Mammary epithelial cell (primary cell): ENCODE measurements at regions of chr1 and their contacts with region 1.

Region 1: DNA sequence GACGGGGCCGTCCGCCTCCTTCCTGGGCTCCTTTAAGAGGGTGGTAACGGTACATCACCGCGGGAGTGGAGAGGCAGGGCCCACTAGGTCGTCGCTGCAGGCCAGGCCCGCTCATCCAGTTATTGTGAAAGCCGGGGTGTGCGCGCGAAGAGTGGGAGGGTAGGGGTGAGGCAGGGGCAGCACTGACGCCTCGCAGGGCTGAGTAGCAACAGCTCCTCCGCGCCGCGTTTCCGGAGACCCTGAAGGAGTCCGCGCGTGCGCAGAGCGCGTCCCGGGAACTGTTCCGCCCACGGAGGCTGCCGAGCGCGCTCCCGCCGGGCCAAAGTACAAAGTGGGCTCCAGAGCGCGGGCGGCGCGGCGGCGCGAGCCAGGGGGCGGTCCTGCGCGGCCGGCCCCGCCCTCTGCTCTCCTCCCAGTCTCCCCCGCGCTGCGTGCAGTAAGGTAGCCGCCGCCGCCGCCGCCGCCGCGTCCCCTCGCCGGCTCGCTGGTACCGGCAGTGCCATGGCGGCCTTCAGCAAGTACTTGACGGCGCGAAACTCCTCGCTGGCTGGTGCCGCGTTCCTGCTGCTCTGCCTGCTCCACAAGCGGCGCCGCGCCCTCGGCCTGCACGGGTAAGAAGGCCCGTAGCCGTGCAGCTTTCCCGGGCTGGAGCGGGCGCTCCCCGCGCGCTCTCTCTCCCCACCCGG is at the start of gene ABCD3:
- DNase-seq: peak; percentile 97
- H3K4me3 ChIP-seq: peak within 1 kb of the TSS; percentile 75 to 94 (median 91)
- H3K27ac ChIP-seq: peak within 1 kb of the TSS; percentile 91
- H3K4me1 ChIP-seq: peaks cover 37% of the 10 kb centered on the region
- H3K27me3 ChIP-seq: no peaks in the 10 kb centered on the region
- CTCF ChIP-seq: no peak
- total RNA-seq, gene ABCD3: 50.3 to 56.2 TPM

Region 2: DNA sequence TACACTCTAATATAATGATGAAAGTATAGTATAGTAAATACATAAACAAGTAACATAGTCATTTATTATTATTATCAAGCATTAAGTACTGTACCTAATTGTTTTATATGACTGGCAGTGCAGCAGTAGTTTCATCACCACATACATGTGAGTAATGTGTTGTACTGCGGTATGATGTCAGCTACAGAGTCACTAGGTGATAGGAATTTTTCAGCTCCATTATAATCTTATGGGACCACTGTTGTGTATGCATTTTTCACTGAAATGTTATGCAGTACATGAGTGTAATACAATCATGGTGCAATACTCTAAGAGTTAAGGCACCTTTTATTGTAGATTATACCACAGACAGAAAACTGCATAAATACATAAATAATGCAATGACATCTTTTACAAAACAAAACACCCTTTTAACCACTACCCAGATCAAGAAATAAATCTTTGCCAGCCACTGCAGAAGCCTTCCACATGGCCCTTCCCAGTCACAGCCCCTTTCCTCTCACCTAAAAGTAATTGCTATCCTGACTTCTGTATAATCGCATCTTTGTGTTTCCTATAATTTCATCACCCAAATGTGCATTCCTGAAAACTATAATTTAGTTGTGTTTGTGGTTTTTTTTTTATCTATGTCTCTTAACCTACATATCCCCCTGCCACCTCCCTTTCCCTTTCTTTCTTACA is 16.4 kb after region 1 on chr1:
- CTCF ChIA-PET with region 1: no interaction called
- dilution Hi-C with region 1: no loop called
- in situ Hi-C with region 1: no loop called
- intact Hi-C with region 1: loop called (anchors 2 kb)
- DNase-seq: no peak
- H3K4me3 ChIP-seq: no peak overlapping the region
- H3K27ac ChIP-seq: no peak overlapping the region
- H3K4me1 ChIP-seq: no peaks in the 10 kb centered on the region
- H3K27me3 ChIP-seq: no peaks in the 10 kb centered on the region
- CTCF ChIP-seq: no peak